Posterior cingulate gyrus (tissue), 11 donors: ENCODE measurements at regions of chr18 and their contacts with region 1.

Region 1: DNA sequence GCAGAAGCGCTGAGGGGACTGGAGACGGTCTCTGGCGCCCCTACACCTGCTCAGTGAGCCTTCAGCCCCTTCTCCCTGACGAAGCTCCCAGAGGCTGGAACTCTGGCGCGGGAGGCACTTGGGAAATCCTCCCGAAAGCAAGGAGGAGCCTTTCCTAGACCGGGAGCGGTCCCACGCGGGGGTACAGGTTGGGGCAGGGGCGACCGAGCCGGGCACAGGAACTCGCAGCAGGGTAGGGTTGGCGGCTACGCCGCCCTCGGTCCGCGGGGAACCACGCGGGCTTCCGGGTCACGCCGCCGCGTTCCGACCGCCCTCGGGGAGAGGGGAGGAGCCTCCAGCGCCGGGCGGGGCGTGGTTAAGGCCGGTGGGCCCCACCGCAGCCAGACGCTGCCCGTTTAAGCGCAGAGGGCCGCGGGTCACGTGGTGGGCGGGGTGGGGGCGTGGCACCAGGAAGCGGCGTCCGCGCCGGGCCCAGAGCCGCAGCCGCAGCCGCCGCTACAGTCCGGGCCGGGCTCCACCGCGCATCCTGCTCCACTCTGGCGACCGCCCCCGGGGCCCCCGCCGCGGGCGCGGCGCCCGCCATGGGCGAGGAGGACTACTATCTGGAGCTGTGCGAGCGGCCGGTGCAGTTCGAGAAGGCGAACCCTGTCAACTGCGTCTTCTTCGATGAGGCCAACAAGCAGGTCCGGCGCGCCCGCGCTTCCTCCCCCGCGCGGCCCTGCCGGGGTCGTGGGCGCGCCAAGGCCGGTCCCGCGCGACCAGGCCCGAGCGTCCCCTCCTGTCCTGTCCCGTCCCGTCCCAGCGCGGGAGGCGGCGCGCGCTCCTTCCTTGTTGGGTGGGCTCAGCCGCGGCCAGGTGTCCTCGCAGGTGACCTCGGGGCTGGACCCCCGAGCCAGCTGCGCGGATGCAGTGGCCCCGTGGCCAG is at the start of gene RMC1:
- DNase-seq: peak; percentile 93 to 100 (median 98)

Region 2: DNA sequence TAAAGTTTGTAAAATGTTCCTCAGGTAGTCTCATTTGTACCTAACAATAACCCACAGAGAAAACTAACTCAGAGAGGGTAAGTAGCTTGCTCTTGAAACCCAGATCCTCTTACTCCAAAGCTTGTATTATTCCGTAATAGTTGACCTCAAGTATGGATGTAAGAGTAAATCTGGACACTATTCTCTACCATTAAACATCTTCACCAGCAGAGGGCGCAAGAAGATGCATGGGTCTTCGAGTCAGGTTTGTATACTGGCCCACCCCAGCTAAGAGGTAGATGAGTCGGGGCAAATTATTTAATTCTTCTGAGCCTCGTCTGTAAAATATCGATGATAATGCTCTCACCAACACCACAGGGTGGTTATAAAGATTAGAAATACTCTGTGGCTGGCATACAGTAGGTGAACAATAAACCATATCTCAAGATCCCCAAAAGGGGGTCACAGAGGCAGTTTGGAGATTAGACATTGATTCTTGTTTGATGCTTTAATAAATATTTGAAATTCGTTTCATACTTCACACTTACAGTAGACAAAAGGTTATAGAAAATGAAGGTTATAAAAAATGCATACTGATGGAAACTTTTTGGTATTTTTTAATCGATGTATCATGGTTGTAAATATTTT is 371.5 kb before region 1 on chr18:
- intact Hi-C with region 1: loop called (anchors 10 kb)
- DNase-seq: peak in 5 of 10 donors; percentile 33 to 84 (median 56)

Region 3: GRCh38 chr18:23155537-23155936 is 347.8 kb before region 1 on chr18:
- intact Hi-C with region 1: no loop called
- DNase-seq: peak in 1 of 10 donors; percentile 16

Region 4: GRCh38 chr18:23452728-23453679 is 50.3 kb before region 1 on chr18 and contains the start of gene RIOK3:
- intact Hi-C with region 1: loop called (anchors 1 kb)
- DNase-seq: peak; percentile 97 to 100 (median 99)

Region 5: DNA sequence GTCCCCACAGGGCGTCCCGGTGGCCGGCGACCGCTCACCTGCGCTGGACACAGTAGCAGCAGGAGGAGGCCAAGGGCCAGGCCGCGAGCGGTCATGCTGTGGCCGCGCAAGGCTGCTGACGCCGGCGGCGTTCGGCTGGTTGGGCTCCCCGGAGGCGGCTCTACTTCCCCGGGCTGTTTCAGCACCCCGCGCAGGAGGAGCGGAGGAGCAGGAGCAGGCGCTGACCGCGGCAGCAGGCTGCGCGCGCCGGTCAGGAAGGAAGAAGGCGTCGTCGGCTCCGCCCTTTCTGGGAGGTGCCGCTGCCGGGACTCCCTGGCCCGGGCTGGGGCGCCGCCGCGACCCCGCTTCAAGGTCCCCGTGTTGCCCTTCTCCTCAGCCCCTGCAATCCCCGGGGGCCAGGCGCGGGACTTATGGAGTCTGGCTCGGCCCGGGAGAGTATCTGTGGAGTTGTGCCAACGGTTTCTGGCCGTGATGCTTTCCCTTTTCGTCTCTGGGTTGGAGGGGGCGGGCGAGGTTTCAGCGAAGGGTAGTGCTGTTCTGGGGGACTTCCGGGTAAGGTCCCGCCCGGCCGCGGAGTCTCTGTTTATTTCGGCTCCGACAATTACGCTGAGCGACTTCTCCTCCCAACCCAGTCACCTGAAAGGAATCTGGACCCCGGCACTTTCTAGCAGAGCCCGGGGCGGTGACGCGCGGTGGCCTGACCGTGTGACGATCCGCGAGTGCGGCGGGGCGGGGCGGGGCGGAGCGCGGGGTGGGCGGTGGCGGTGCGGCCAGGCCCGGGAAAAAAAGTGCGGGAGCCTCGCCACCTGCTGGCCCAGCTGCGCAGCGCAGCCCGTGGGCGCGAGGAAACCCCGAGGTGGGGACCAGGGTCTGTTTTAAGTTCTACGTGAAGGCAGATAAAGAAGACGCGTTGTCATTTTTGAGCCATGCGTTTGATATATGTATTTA is 83.2 kb after region 1 on chr18 and contains the start of gene NPC1:
- intact Hi-C with region 1: loop called (anchors 2 kb)
- DNase-seq: peak; percentile 87 to 99 (median 90)

Region 6: DNA sequence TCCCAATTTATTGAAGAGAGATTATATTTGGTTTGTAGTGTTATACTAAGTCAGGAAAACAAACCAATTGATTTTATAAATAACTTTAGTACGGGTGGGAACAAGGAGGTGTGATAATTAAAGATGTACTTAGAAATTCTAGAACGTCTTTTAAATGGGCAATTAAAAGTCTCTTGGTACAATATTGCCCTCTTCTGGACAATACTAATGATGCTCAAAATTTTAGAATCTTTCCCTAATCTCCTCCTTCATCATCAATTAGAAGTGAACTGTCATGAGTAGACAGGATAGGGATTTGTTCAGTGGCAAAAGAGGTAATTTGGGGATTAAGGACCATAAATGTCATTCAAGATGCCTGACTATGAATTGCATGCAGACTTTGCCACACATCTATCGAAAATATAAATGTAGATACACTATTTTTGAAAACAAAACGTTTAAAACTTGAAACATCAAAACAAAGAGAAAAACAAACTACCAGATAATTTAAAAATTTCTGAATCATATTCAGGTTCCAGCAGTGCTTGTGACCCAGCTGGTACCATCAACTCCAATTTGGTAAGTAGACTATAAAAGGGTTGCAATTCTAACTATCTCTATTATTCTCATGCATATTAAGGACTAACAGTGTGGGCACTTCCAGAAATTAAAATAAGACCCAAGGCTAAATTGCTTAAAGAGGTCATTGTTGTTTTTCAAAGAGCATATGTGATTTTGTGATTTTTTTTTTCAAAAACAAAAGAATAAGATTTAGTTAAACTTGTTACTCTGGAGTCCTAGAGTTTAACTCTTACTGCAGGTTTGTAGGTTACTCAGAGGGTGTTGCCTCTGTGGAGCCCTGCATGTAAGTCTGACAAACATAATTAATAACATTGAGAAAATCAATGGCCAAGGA is 309.5 kb after region 1 on chr18:
- intact Hi-C with region 1: loop called (anchors 10 kb)
- DNase-seq: no peak

Region 7: DNA sequence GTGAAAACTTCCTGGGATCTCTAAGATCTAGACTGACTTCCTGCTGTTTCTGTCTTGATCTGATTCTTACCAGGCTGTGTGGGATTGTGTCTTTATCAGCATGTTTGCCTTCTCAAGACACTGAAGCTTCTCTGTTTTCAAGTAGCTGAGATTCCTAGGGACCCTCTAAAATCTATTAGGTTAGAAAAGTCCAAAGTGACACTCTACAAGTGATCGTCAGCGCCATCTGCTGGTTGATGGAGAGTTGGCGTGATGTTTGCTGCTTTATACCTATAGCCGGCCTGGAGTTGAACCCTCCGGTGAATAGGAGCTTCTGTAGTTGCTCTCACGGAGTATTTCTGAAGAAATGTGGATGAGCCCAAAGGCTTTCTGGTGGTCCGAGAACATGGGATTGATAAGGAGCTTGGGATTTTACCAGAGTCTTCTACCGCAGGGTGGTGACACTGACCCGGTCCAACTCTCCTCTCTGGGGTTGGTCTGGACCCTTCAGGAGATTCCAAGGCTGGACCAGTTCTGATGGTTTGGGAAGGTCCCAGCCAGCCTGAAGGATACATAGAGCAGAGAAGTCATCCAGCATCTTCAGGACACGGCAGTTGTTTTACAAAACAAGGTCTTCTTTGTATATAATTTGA is 415.2 kb after region 1 on chr18:
- intact Hi-C with region 1: loop called (anchors 10 kb)
- DNase-seq: peak; percentile 27 to 91 (median 68)